H1 (cell line): ENCODE measurements at regions of chr22 and their contacts with region 1.

Region 1: DNA sequence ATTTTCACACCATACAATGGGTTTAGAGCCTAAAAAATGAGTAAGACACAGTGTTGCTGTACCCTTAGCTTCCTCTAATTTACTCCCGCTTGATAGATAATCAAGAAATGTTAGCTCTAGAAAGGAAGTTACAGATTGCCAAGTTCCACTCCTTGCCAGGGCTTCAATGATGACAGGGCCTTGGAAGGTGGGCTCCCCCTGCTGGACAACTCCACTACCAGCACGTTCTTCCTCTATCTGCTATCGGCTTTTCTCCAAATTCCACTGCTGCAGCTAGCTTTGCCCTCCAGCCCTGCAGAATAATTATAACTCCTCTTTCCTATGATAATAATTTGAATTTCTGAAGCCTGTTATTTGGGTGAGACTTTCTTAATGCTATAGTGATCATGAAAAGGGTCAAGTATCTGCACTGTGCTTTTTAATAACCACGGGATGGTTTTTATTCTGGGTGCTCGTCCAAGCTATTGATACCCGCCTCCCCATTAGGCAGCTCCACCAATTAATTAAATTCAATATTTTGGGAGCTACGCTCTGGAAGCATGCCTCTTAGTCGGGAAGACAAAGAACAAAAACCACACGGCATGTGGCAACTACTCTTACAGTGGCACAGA is 9.0 kb downstream of the SYN3 start:
- DNase-seq: peak in 1 of 2 experiments; percentile 83
- H3K4me3 ChIP-seq: no peak overlapping the region
- H3K27ac ChIP-seq: no peak overlapping the region; the same call in 1 of the 2 replicates
- H3K4me1 ChIP-seq: peaks cover 11 to 33% (median 28%) of the 10 kb centered on the region in 4 experiments
- H3K27me3 ChIP-seq: no peaks in the 10 kb centered on the region; a peak in 1 of 7 replicates
- CTCF ChIP-seq: peak; percentile 85 to 94 (median 87)
- EP300 ChIP-seq: no peak
- POLR2A ChIP-seq: no peak
- RAD21 ChIP-seq: peak; percentile 72 to 79

Region 2: DNA sequence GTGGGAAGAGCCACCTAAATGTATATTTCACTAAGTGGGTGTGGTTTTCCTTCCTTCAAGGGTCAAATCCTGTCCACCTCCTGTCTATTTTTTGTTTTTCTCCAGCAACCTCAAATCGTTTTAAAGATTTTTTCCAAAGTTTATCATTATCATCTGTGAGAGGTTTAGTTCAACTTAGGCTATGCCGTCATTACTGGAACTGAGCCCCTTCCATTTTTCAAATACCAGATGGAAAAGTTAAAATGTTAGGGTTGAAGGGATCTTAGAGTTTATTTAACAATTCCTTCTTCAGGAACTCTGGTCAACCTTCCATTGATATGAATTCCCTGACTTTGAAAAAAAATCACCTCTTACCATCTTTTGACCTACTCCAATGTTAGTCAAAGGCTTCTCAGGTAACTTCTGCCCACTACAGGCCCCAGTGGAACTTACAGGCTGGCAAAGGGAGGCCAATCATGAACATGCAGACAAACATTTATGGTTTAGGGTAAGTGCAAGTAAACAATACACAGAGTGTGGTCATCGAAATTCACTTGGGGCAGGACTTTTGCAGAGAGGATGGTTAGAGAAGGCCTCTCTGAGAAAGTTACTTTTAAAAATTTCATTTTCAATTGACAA is 36.3 kb before region 1 on chr22:
- CTCF ChIA-PET with region 1: interaction called, 131 read pairs
- POLR2A ChIA-PET with region 1: interaction called, 3 read pairs
- DNase-seq: no peak
- H3K4me3 ChIP-seq: no peak overlapping the region
- H3K27ac ChIP-seq: no peak overlapping the region
- H3K4me1 ChIP-seq: no peaks in the 10 kb centered on the region
- H3K27me3 ChIP-seq: no peaks in the 10 kb centered on the region
- CTCF ChIP-seq: peak in 1 of 3 experiments; percentile 43; a peak in 1 of 4 replicates
- EP300 ChIP-seq: no peak
- POLR2A ChIP-seq: no peak
- RAD21 ChIP-seq: no peak

Region 3: GRCh38 chr22:33028234-33028633 is 21.0 kb before region 1 on chr22:
- CTCF ChIA-PET with region 1: interaction called, 131 read pairs
- POLR2A ChIA-PET with region 1: interaction called, 30 read pairs
- DNase-seq: peak in 1 of 2 experiments; percentile 39
- H3K4me3 ChIP-seq: no peak overlapping the region
- H3K27ac ChIP-seq: no peak overlapping the region
- H3K4me1 ChIP-seq: peaks cover 0 to 7% (median 0%) of the 10 kb centered on the region in 4 experiments; a peak in 2 of 7 replicates
- H3K27me3 ChIP-seq: no peaks in the 10 kb centered on the region
- CTCF ChIP-seq: no peak
- EP300 ChIP-seq: no peak
- POLR2A ChIP-seq: no peak
- RAD21 ChIP-seq: no peak

Region 4: GRCh38 chr22:33038131-33038772 is 11.0 kb before region 1 on chr22:
- CTCF ChIA-PET with region 1: interaction called, 49 read pairs
- POLR2A ChIA-PET with region 1: interaction called, 11 read pairs
- DNase-seq: no peak
- H3K4me3 ChIP-seq: no peak overlapping the region
- H3K27ac ChIP-seq: no peak overlapping the region
- H3K4me1 ChIP-seq: peaks cover 6 to 20% (median 13%) of the 10 kb centered on the region in 4 experiments; a peak in 6 of 7 replicates
- H3K27me3 ChIP-seq: peaks cover 0 to 2% (median 0%) of the 10 kb centered on the region in 4 experiments; a peak in 1 of 7 replicates
- CTCF ChIP-seq: no peak
- EP300 ChIP-seq: no peak
- POLR2A ChIP-seq: no peak
- RAD21 ChIP-seq: no peak

Region 5: DNA sequence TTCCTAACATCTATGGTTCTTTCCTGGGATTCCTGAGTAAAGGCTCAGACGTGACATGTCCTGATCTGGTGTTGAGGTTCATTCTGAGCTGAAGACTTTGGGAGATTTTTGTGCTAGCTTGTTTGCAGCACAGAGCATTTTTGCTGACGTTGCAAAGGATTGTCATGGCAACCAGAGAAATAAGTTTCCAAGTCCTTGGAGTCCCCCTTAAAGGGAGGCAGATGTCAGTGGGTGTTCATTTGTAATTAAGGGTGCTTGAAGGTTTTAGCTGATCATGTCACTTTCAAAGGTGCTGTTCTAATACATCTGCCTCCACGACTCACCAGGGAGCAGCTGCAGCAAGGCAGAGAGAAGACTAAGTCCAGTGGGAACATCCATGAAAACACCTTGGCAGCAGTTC is 14.4 kb after region 1 on chr22:
- CTCF ChIA-PET with region 1: interaction called, 49 read pairs
- POLR2A ChIA-PET with region 1: interaction called, 36 read pairs
- DNase-seq: no peak
- H3K4me3 ChIP-seq: no peak overlapping the region
- H3K27ac ChIP-seq: no peak overlapping the region
- H3K4me1 ChIP-seq: peaks cover 0 to 21% (median 14%) of the 10 kb centered on the region in 4 experiments; a peak in 5 of 7 replicates
- H3K27me3 ChIP-seq: no peaks in the 10 kb centered on the region; a peak in 1 of 7 replicates
- CTCF ChIP-seq: no peak
- EP300 ChIP-seq: no peak
- POLR2A ChIP-seq: no peak
- RAD21 ChIP-seq: no peak

Region 6: DNA sequence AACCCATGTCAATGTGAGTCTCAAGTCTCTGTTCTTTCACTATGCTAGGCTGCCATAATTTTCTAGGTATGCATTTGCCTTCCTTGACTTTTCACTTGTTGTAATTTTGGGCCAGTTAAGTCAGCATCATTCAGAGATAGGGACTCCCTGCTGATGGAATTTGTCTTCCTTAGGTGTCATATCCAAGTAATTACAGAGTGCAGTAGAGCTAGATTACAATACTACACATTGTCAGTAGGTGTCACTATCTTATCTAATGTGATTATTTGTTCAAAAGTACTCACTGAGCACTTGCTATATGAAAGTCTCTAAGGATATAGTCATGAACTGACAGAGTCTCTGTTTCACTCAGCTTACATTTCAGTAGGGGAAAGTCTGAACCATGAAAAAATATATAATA is 34.0 kb after region 1 on chr22:
- CTCF ChIA-PET with region 1: interaction called, 10 read pairs
- POLR2A ChIA-PET with region 1: interaction called, 3 read pairs
- DNase-seq: no peak
- H3K4me3 ChIP-seq: no peak overlapping the region
- H3K27ac ChIP-seq: no peak overlapping the region
- H3K4me1 ChIP-seq: no peaks in the 10 kb centered on the region
- H3K27me3 ChIP-seq: no peaks in the 10 kb centered on the region
- CTCF ChIP-seq: peak in 1 of 3 experiments; percentile 32; a peak in 1 of 4 replicates
- EP300 ChIP-seq: no peak
- POLR2A ChIP-seq: no peak
- RAD21 ChIP-seq: no peak

Region 7: GRCh38 chr22:33325235-33326004 is 276.2 kb after region 1 on chr22:
- CTCF ChIA-PET with region 1: no interaction called
- POLR2A ChIA-PET with region 1: no interaction called
- DNase-seq: no peak
- H3K4me3 ChIP-seq: no peak overlapping the region
- H3K27ac ChIP-seq: no peak overlapping the region
- H3K4me1 ChIP-seq: no peaks in the 10 kb centered on the region
- H3K27me3 ChIP-seq: no peaks in the 10 kb centered on the region
- CTCF ChIP-seq: no peak
- EP300 ChIP-seq: no peak
- POLR2A ChIP-seq: no peak
- RAD21 ChIP-seq: no peak